ENCODE measurements at regions of chr1 and their contacts with region 1.

Region 1: GRCh38 chr1:42576935-42577334 is 81.3 kb upstream of the PPIH start:
- DNase-seq: no peak
- H3K4me3 Mint-ChIP-seq: no peak overlapping the region
- H3K27ac Mint-ChIP-seq: no peak overlapping the region
- H3K4me1 Mint-ChIP-seq: no peaks in the 10 kb centered on the region
- H3K27me3 Mint-ChIP-seq: no peaks in the 10 kb centered on the region
- CTCF ChIP-seq: no peak

Region 2: DNA sequence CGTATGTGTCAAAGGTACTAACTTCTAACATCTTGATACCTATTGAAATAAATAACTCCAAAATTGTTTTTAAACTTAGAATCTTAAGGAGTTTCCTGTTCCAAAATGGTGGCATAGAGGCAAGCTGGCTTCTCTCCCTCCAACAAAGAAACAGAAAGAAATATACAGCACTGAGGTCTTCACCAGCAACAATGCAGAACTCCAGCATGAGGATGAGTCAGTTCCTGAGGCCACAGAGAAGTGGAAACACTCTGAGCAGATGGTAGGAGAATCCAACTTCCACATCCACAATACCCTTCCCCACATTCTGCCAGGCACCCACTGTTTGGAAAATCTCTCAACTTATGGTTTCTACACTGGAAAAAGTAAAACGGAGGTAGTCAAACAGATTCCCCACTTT is 69.1 kb after region 1 on chr1:
- CTCF ChIA-PET with region 1: no interaction called
- intact Hi-C with region 1: loop called (anchors 5 kb)
- DNase-seq: no peak
- H3K4me3 Mint-ChIP-seq: no peak overlapping the region
- H3K27ac Mint-ChIP-seq: no peak overlapping the region
- H3K4me1 Mint-ChIP-seq: no peaks in the 10 kb centered on the region
- H3K27me3 Mint-ChIP-seq: no peaks in the 10 kb centered on the region
- CTCF ChIP-seq: no peak

Region 3: GRCh38 chr1:42747125-42747524 is 170.2 kb after region 1 on chr1:
- CTCF ChIA-PET with region 1: no interaction called
- intact Hi-C with region 1: loop called (anchors 5 kb)
- DNase-seq: peak; percentile 56
- H3K4me3 Mint-ChIP-seq: no peak overlapping the region
- H3K27ac Mint-ChIP-seq: no peak overlapping the region
- H3K4me1 Mint-ChIP-seq: no peaks in the 10 kb centered on the region
- H3K27me3 Mint-ChIP-seq: peaks cover 16% of the 10 kb centered on the region
- CTCF ChIP-seq: peak; percentile 50